H1 (cell line): ENCODE measurements at regions of chr2 and their contacts with region 1.

Region 1: GRCh38 chr2:9630749-9631483 is at the start of gene YWHAQ:
- DNase-seq: peak; percentile 95 to 97
- H3K4me3 ChIP-seq: peak within 1 kb of the TSS; percentile 93 to 100 (median 97)
- H3K27ac ChIP-seq: peak within 1 kb of the TSS; percentile 97
- H3K4me1 ChIP-seq: peaks cover 0 to 13% (median 3%) of the 10 kb centered on the region in 4 experiments; a peak in 4 of 7 replicates
- H3K27me3 ChIP-seq: peaks cover 0 to 15% (median 8%) of the 10 kb centered on the region in 4 experiments; a peak in 3 of 7 replicates
- CTCF ChIP-seq: no peak
- EP300 ChIP-seq: peak in 1 of 2 experiments; percentile 78; a peak in 1 of 3 replicates
- POLR2A ChIP-seq: peak; percentile 97 to 98
- RAD21 ChIP-seq: no peak
- total RNA-seq, gene YWHAQ: 468 and 480 TPM in 2 replicates

Region 2: GRCh38 chr2:9423100-9423921 is 207.6 kb before region 1 on chr2 and contains the starts of genes CPSF3 and ITGB1BP1:
- CTCF ChIA-PET with region 1: no interaction called
- POLR2A ChIA-PET with region 1: interaction called, 12 read pairs
- DNase-seq: peak; percentile 92 to 98
- H3K4me3 ChIP-seq: peak within 1 kb of the TSS; percentile 84 to 98 (median 96)
- H3K27ac ChIP-seq: peak within 1 kb of the TSS; percentile 72; the same call in 1 of the 2 replicates
- H3K4me1 ChIP-seq: peaks cover 5 to 14% (median 8%) of the 10 kb centered on the region in 4 experiments; a peak in 6 of 7 replicates
- H3K27me3 ChIP-seq: peaks cover 0 to 9% (median 4%) of the 10 kb centered on the region in 4 experiments; a peak in 4 of 7 replicates
- CTCF ChIP-seq: no peak
- EP300 ChIP-seq: no peak
- POLR2A ChIP-seq: peak in 1 of 2 experiments; percentile 58; a peak in 2 of 3 replicates
- RAD21 ChIP-seq: no peak
- total RNA-seq, gene CPSF3: 90.1 and 93.3 TPM in 2 replicates
- total RNA-seq, gene ITGB1BP1: 45.4 and 50.1 TPM in 2 replicates

Region 3: DNA sequence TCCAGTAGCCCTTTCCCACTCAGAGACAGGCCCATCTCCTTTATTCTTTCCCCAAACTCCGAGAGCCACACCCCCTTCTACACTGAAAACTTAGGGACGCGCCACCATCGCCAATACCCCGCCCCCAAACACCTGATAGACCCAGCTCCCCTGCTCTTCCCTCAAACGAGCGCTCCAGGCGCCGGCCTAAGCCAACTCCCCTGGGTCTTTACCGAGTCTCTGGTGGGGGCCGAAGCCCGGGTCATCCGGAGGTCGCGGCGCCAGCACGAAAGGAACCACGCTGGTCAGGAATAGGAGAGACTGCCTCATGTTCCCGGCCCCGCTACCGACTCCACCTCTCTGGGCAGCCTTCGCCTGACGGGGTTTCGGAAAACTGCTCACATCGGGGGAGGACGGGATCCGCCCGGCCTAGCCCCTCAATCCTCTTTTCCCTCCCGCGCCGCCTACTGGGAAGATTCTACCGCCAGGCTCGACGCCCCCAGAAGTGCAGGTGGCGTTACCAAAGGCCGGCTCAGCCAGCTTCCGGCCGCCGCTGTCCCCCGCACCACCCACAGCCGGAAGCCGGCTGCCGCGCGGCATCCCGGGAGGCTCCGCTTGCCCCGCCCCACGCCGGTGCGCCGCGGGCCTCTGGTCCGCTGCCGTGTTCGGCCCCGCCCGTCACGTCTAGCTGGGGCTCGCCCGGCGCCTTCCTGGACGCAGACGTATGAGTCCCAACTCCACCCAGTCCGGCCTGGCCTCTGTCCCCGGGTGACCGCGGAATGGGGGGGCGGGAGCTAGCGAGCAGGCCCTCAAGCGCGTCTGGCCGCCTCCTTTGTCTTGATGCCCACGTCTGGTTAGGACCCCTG is 75.4 kb before region 1 on chr2 and contains the start of gene ADAM17:
- CTCF ChIA-PET with region 1: interaction called, 6 read pairs
- POLR2A ChIA-PET with region 1: interaction called, 46 read pairs
- DNase-seq: peak; percentile 82 to 91
- H3K4me3 ChIP-seq: peak within 1 kb of the TSS; percentile 74 to 92 (median 86)
- H3K27ac ChIP-seq: peak within 1 kb of the TSS; percentile 87
- H3K4me1 ChIP-seq: peaks cover 0 to 3% (median 0%) of the 10 kb centered on the region in 4 experiments; a peak in 1 of 7 replicates
- H3K27me3 ChIP-seq: no peaks in the 10 kb centered on the region
- CTCF ChIP-seq: peak; percentile 33 to 51 (median 40); a peak in 3 of 4 replicates
- EP300 ChIP-seq: no peak
- POLR2A ChIP-seq: peak in 1 of 2 experiments; percentile 87; a peak in 2 of 3 replicates
- RAD21 ChIP-seq: peak; percentile 4 to 13; a peak in 3 of 4 replicates
- total RNA-seq, gene ADAM17: 23.5 and 25.1 TPM in 2 replicates

Region 4: DNA sequence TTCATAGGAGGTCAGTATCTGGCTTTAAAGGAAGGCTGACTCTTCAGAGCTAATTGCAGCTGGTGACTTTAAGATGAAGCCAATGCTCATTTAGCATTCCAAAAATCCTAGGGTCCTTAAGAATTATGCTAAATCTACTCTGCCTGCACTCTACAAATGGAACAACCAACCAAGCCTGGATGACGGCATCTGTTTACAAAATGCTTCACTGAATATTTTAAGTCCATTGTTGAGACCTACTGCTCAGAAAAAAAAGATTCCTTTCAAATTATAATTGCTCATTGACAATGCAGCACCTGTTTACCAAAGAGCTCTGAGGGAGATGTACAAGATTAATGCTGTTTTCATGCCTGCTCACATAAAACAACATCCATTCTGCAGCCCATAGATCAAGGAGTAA is 31.5 kb before region 1 on chr2:
- CTCF ChIA-PET with region 1: interaction called, 5 read pairs
- POLR2A ChIA-PET with region 1: interaction called, 11 read pairs
- DNase-seq: no peak
- H3K4me3 ChIP-seq: no peak overlapping the region
- H3K27ac ChIP-seq: no peak overlapping the region
- H3K4me1 ChIP-seq: peaks cover 0 to 3% (median 0%) of the 10 kb centered on the region in 4 experiments; a peak in 1 of 7 replicates
- H3K27me3 ChIP-seq: no peaks in the 10 kb centered on the region
- CTCF ChIP-seq: no peak
- EP300 ChIP-seq: no peak
- POLR2A ChIP-seq: no peak
- RAD21 ChIP-seq: no peak

Region 5: DNA sequence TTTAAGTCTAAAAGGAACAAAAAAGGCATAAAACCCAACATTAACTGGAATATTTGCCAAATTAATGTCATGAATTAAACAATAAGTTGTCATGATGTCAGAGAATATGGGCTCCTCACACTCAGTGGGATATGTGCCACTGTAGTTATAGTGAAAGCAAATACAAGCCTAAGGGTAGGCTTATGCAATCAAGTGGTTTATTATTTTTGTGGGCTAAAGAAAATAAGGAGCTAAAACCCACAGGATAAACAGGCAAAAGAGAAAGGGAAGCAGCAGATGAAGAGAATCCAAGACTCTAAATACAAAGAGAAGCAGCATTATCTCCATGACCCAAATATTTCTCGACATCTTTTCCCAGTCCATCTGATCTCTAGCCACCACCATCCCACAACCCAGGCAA is 17.6 kb before region 1 on chr2:
- CTCF ChIA-PET with region 1: no interaction called
- POLR2A ChIA-PET with region 1: interaction called, 71 read pairs
- DNase-seq: no peak
- H3K4me3 ChIP-seq: no peak overlapping the region
- H3K27ac ChIP-seq: no peak overlapping the region
- H3K4me1 ChIP-seq: peaks cover 0 to 5% (median 1%) of the 10 kb centered on the region in 4 experiments; a peak in 3 of 7 replicates
- H3K27me3 ChIP-seq: no peaks in the 10 kb centered on the region
- CTCF ChIP-seq: no peak
- EP300 ChIP-seq: no peak
- POLR2A ChIP-seq: no peak
- RAD21 ChIP-seq: no peak

Region 6: GRCh38 chr2:9618410-9618809 is 12.5 kb before region 1 on chr2:
- CTCF ChIA-PET with region 1: interaction called, 3 read pairs
- POLR2A ChIA-PET with region 1: interaction called, 71 read pairs
- DNase-seq: no peak
- H3K4me3 ChIP-seq: no peak overlapping the region
- H3K27ac ChIP-seq: no peak overlapping the region
- H3K4me1 ChIP-seq: peaks cover 0 to 5% (median 1%) of the 10 kb centered on the region in 4 experiments; a peak in 2 of 7 replicates
- H3K27me3 ChIP-seq: no peaks in the 10 kb centered on the region
- CTCF ChIP-seq: no peak
- EP300 ChIP-seq: no peak
- POLR2A ChIP-seq: no peak
- RAD21 ChIP-seq: no peak